Spleen (tissue), 13 donors: ENCODE measurements at regions of chr20 and their contacts with region 1.

Region 1: GRCh38 chr20:47785854-47786764 is 828 bp upstream of the SULF2 start:
- DNase-seq: no peak
- H3K4me3 ChIP-seq: peak overlapping the region; percentile 23 to 71 (median 46)
- H3K27ac ChIP-seq: peak overlapping the region in 5 of 8 donors; percentile 7 to 64 (median 38)
- H3K4me1 ChIP-seq: peaks cover 12 to 30% (median 23%) of the 10 kb centered on the region in 6 donors
- H3K27me3 ChIP-seq: peaks cover 0 to 86% (median 35%) of the 10 kb centered on the region in 7 donors
- CTCF ChIP-seq: peak; percentile 20 to 79 (median 60)
- POLR2A ChIP-seq: no peak

Region 2: DNA sequence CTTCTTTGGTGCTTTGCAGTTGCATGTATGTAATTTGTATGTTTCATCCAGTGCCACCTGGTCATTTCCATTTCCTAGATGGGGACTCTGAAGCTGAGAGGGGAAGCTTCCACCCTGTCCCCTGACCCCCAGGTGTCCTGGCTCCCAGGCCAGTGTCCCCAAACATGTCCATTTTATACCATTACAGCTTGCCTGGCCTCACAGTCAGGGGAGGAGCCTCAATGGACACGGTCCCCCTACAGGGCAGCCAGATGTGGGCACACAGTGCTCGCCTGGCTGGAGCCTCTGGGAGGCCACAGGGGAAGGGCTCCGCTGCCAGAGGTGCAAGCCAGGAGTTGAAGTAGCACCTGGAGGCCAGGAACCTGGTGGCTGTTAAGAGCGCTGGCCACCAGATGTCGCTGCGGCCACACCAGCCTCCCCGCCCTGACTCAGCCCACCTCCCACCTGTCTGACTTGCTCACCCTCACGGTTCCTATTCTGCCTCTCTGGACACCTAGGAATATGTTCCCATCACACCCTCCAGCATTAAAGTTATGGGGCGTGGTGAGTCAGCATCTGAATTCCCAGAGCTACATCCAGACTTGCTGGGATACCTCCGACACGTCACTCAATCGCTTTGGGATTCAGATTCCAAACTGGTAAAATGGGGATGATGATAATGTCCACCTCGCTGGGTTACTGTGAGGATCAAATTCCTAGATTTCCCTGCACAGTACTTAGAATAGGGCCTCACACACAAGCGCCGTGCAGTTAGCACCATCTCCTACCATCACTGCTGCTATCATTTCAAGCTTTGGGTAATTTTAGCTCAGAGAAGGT is 108.3 kb before region 1 on chr20:
- intact Hi-C with region 1: loop called (anchors 10 kb)
- DNase-seq: peak; percentile 85
- H3K4me3 ChIP-seq: no peak overlapping the region
- H3K27ac ChIP-seq: no peak overlapping the region
- H3K4me1 ChIP-seq: peaks cover 0 to 22% (median 11%) of the 10 kb centered on the region in 6 donors
- H3K27me3 ChIP-seq: peaks cover 0 to 13% (median 0%) of the 10 kb centered on the region in 7 donors
- CTCF ChIP-seq: peak in 10 of 11 experiments; percentile 52 to 83 (median 74)
- POLR2A ChIP-seq: no peak